ENCODE measurements at regions of chr11 and their contacts with region 1.

Region 1: DNA sequence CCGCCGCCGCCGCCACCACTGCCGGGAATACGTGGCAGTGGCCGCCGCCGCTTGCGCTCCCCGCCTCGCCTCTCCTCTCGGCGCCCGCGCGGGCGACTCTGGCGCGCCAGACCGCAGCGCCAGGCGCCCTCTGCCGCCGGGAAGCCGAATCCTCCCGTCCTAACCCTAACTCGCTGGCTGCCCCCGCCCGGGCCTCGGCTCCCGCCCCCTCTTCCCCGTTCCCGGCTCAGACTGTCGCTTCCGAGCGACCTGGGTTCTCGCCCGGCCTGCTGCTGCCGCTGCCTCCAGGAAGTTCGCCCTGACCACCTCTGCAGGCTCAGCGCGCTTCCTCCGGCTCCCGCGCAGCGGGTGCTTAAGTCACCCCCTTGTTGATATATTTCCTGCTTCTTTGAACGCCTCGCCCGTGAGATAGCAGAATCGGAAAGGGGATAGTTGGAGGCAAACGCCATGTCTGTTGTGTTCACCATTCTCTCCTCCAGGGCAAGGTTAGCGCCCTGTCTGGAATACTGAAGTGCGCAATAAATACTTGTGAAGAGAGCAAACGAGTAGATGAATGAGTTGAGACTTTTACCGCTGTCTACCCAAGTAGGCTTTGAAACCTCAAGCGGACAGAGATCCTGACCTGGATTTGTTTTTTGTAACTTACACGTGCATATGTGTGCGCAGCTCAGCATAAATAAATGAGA is at the start of gene SMCO4:
- DNase-seq: peak; percentile 67
- H3K4me3 Mint-ChIP-seq: peak within 1 kb of the TSS; percentile 93
- H3K27ac Mint-ChIP-seq: peak within 1 kb of the TSS; percentile 85
- H3K4me1 Mint-ChIP-seq: peaks cover 28% of the 10 kb centered on the region
- H3K27me3 Mint-ChIP-seq: peaks cover 3% of the 10 kb centered on the region
- total RNA-seq, gene SMCO4: 33.4 and 34.8 TPM in 2 replicates

Region 2: GRCh38 chr11:93234602-93235207 is 308.7 kb before region 1 on chr11:
- intact Hi-C with region 1: loop called (anchors 1 kb)
- DNase-seq: peak; percentile 55
- H3K4me3 Mint-ChIP-seq: no peak overlapping the region
- H3K27ac Mint-ChIP-seq: no peak overlapping the region
- H3K4me1 Mint-ChIP-seq: no peaks in the 10 kb centered on the region
- H3K27me3 Mint-ChIP-seq: peaks cover 22% of the 10 kb centered on the region

Region 3: GRCh38 chr11:93512073-93512475 is 31.4 kb before region 1 on chr11:
- intact Hi-C with region 1: loop called (anchors 1 kb)
- DNase-seq: no peak
- H3K4me3 Mint-ChIP-seq: peak overlapping the region; percentile 70
- H3K27ac Mint-ChIP-seq: peak overlapping the region; percentile 94
- H3K4me1 Mint-ChIP-seq: peaks cover 49% of the 10 kb centered on the region
- H3K27me3 Mint-ChIP-seq: no peaks in the 10 kb centered on the region

Region 4: GRCh38 chr11:93652161-93652597 is 108.7 kb after region 1 on chr11:
- intact Hi-C with region 1: loop called (anchors 2 kb)
- DNase-seq: no peak
- H3K4me3 Mint-ChIP-seq: no peak overlapping the region
- H3K27ac Mint-ChIP-seq: no peak overlapping the region
- H3K4me1 Mint-ChIP-seq: peaks cover 22% of the 10 kb centered on the region
- H3K27me3 Mint-ChIP-seq: peaks cover 18% of the 10 kb centered on the region

Region 5: GRCh38 chr11:93784152-93784934 is 240.9 kb after region 1 on chr11 and contains the start of gene MED17:
- intact Hi-C with region 1: loop called (anchors 2 kb)
- DNase-seq: peak; percentile 87
- H3K4me3 Mint-ChIP-seq: peak within 1 kb of the TSS; percentile 93
- H3K27ac Mint-ChIP-seq: peak within 1 kb of the TSS; percentile 88
- H3K4me1 Mint-ChIP-seq: peaks cover 45% of the 10 kb centered on the region
- H3K27me3 Mint-ChIP-seq: no peaks in the 10 kb centered on the region
- total RNA-seq, gene MED17: 55.8 and 59.4 TPM in 2 replicates

Measured in activated T-helper 1 cell treated with anti-CD3 and anti-CD28 coated beads, Interleukin-12 subunit alpha, Interleukin-12 subunit beta, Interleukin-2, Interleukin-4 antibody, amounts not matched to agents 30 ng/mL and 10 ng/mL and 1 ng/mL, durations not matched to agents 14 hours and 24 hours and 36 hours (primary cell).